T-cell (primary cell): ENCODE measurements at regions of chr4 and their contacts with region 1.

Region 1: DNA sequence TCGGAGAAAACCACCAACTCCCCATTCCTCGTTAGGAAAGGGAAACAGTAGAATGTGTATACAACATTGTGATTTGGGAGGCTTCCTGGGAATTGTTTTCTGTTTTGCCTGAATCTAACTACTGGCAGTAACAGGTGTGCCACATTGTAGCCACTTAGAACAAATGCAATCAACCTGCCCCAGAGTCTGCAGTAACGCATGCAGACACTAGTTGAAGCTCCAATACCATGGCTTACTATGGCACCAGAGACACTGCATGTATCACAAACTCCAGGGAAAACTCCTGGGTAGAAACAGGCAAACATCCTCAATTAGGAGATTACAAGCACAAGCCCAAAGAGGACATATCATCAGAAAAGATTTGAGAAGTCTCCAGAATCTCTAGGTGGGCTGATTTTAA is 154.2 kb upstream of the NEIL3 start:
- DNase-seq: no peak
- ATAC-seq: no peak
- H3K4me3 ChIP-seq: no peak overlapping the region
- H3K4me3 Mint-ChIP-seq: no peak overlapping the region
- H3K27ac ChIP-seq: no peak overlapping the region
- H3K27ac Mint-ChIP-seq: no peak overlapping the region
- H3K4me1 ChIP-seq: no peaks in the 10 kb centered on the region
- H3K4me1 Mint-ChIP-seq: no peaks in the 10 kb centered on the region
- H3K27me3 ChIP-seq: no peaks in the 10 kb centered on the region
- H3K27me3 Mint-ChIP-seq: no peaks in the 10 kb centered on the region

Region 2: DNA sequence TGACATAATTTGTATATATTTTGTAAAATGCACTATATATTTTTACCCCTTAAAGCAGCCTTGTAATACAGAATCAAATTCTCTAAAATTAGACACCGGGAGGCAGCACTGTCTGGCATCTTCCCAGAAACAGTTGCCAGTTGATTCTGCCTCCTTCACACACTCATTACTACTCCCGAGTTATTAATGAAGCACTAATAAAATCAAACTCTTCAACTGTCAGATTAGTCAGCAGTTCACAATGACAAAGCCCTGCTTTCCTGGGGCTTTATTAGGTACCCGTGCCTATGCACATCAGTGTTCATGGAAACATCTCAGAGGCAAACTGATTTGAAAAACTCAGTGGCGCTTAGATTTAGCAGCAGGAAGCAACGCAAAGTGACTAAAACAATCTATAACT is 259.2 kb before region 1 on chr4:
- CTCF ChIA-PET with region 1: no interaction called
- POLR2A ChIA-PET with region 1: no interaction called
- DNase-seq: no peak
- ATAC-seq: no peak
- H3K4me3 ChIP-seq: no peak overlapping the region
- H3K4me3 Mint-ChIP-seq: no peak overlapping the region
- H3K27ac ChIP-seq: no peak overlapping the region
- H3K27ac Mint-ChIP-seq: no peak overlapping the region
- H3K4me1 ChIP-seq: no peaks in the 10 kb centered on the region
- H3K4me1 Mint-ChIP-seq: no peaks in the 10 kb centered on the region
- H3K27me3 ChIP-seq: no peaks in the 10 kb centered on the region
- H3K27me3 Mint-ChIP-seq: no peaks in the 10 kb centered on the region

Region 3: GRCh38 chr4:177047070-177047850 is 108.2 kb before region 1 on chr4:
- CTCF ChIA-PET with region 1: interaction called in 1 of 2 experiments, 10 read pairs
- POLR2A ChIA-PET with region 1: no interaction called
- DNase-seq: peak in 28 of 35 experiments; percentile 1 to 57 (median 17)
- ATAC-seq: peak; percentile 43 to 74 (median 65)
- H3K4me3 ChIP-seq: no peak overlapping the region
- H3K4me3 Mint-ChIP-seq: no peak overlapping the region
- H3K27ac ChIP-seq: no peak overlapping the region
- H3K27ac Mint-ChIP-seq: no peak overlapping the region
- H3K4me1 ChIP-seq: no peaks in the 10 kb centered on the region
- H3K4me1 Mint-ChIP-seq: no peaks in the 10 kb centered on the region
- H3K27me3 ChIP-seq: peaks cover 0 to 4% of the 10 kb centered on the region in 2 experiments
- H3K27me3 Mint-ChIP-seq: peaks cover 4% of the 10 kb centered on the region in 2 donors

Region 4: GRCh38 chr4:177190995-177191568 is 35.6 kb after region 1 on chr4:
- CTCF ChIA-PET with region 1: no interaction called
- POLR2A ChIA-PET with region 1: no interaction called
- DNase-seq: no peak
- ATAC-seq: no peak
- H3K4me3 ChIP-seq: no peak overlapping the region
- H3K4me3 Mint-ChIP-seq: no peak overlapping the region
- H3K27ac ChIP-seq: no peak overlapping the region
- H3K27ac Mint-ChIP-seq: no peak overlapping the region
- H3K4me1 ChIP-seq: no peaks in the 10 kb centered on the region
- H3K4me1 Mint-ChIP-seq: no peaks in the 10 kb centered on the region
- H3K27me3 ChIP-seq: no peaks in the 10 kb centered on the region
- H3K27me3 Mint-ChIP-seq: peaks cover 0 to 3% of the 10 kb centered on the region in 2 donors